ENCODE measurements at regions of chr7 and their contacts with region 1.

Region 1: GRCh38 chr7:78489476-78490240 is 691.1 kb downstream of the PHTF2 start:
- DNase-seq: no peak
- H3K4me3 ChIP-seq: no peak overlapping the region
- H3K27ac ChIP-seq: peak overlapping the region in 1 of 2 donors; percentile 2
- H3K4me1 ChIP-seq: no peaks in the 10 kb centered on the region
- H3K27me3 ChIP-seq: no peaks in the 10 kb centered on the region
- CTCF ChIP-seq: no peak
- POLR2A ChIP-seq: no peak

Region 2: DNA sequence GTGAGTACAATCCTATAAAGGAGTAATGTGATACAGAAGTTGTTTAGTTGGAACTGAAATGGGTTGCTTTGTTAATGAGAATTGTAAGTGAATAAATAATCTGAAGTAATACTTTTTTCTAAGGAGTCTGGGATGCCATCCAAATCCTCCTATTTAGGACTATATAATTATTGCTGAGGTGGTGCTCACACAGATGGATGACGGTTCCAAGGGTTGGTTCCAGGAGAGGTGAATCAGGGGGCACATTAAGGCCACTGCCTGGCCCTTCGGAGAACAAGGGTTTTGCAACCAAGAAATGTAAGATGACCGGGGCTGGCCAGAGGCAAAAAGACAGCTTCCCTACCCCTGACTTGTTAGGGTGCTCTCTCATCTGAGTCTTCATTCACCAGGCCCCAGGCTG is 338.4 kb before region 1 on chr7:
- intact Hi-C with region 1: loop called (anchors 10 kb)
- DNase-seq: no peak
- H3K4me3 ChIP-seq: no peak overlapping the region
- H3K27ac ChIP-seq: no peak overlapping the region
- H3K4me1 ChIP-seq: no peaks in the 10 kb centered on the region
- H3K27me3 ChIP-seq: no peaks in the 10 kb centered on the region
- CTCF ChIP-seq: no peak
- POLR2A ChIP-seq: no peak

Region 3: GRCh38 chr7:78232806-78233205 is 256.9 kb before region 1 on chr7:
- intact Hi-C with region 1: loop called (anchors 10 kb)
- DNase-seq: no peak
- H3K4me3 ChIP-seq: no peak overlapping the region
- H3K27ac ChIP-seq: no peak overlapping the region
- H3K4me1 ChIP-seq: no peaks in the 10 kb centered on the region
- H3K27me3 ChIP-seq: no peaks in the 10 kb centered on the region
- CTCF ChIP-seq: no peak
- POLR2A ChIP-seq: no peak

Region 4: GRCh38 chr7:78427209-78427608 is 62.4 kb before region 1 on chr7:
- intact Hi-C with region 1: no loop called
- DNase-seq: no peak
- H3K4me3 ChIP-seq: no peak overlapping the region
- H3K27ac ChIP-seq: no peak overlapping the region
- H3K4me1 ChIP-seq: no peaks in the 10 kb centered on the region
- H3K27me3 ChIP-seq: no peaks in the 10 kb centered on the region
- CTCF ChIP-seq: no peak
- POLR2A ChIP-seq: no peak

Region 5: DNA sequence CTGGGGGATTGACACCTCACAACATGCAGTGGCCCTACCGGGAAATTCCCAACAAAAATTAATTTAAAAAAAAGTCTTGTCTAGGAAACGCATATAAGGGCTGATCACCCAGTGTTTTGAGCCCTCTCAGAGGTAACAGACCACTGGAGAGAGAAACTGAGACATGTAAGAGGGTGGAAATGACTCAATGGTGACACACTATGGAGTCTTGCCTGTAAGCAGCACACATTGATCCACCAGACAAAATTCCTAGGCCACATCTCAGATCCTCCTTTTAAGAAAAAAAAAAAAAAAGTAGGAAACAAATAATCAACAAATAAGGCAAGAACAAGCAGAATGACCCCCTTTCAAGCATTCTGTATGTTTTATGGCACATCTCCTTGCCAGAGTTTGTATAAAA is 667.6 kb after region 1 on chr7:
- intact Hi-C with region 1: no loop called
- DNase-seq: no peak
- H3K4me3 ChIP-seq: no peak overlapping the region
- H3K27ac ChIP-seq: no peak overlapping the region
- H3K4me1 ChIP-seq: no peaks in the 10 kb centered on the region
- H3K27me3 ChIP-seq: no peaks in the 10 kb centered on the region
- CTCF ChIP-seq: no peak
- POLR2A ChIP-seq: no peak